Activated B cell treated with CpG ODN at 0.5 μM for 24 hours (primary cell): ENCODE measurements at regions of chr9 and their contacts with region 1.

Region 1: DNA sequence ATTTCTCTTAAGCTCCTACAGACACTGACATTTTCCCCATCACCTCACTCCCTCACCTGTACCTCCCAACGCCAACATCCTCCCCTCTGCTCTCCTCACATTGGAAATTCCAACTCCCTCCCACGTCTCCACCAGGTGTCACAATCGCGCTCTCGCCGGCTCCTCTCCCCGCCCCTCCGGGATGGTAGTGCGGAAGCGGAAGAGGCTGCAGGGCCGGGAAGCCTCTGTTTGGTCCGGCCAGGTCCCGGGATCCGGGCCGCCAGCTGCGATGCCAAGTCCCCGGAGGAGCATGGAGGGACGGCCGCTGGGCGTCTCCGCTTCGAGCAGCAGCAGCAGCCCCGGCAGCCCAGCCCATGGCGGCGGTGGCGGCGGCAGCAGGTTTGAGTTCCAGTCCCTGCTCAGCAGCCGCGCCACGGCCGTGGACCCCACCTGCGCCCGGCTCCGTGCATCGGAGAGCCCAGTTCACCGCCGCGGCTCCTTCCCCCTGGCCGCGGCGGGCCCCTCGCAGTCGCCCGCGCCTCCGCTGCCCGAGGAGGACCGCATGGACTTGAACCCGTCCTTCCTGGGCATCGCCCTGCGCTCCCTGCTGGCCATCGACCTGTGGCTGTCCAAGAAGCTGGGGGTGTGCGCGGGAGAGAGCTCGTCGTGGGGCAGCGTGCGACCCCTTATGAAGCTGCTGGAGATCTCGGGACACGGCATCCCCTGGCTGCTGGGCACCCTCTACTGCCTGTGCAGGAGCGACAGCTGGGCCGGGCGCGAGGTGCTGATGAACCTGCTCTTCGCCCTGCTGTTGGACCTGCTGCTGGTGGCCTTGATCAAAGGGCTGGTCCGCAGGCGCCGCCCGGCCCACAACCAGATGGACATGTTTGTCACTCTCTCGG is at the start of gene PLPP6:
- DNase-seq: peak; percentile 66
- ATAC-seq: peak; percentile 87
- H3K4me3 Mint-ChIP-seq: peak within 1 kb of the TSS; percentile 92
- H3K27ac Mint-ChIP-seq: peak within 1 kb of the TSS; percentile 80
- H3K4me1 Mint-ChIP-seq: peaks cover 47% of the 10 kb centered on the region
- H3K27me3 Mint-ChIP-seq: peaks cover 8% of the 10 kb centered on the region
- CTCF ChIP-seq: no peak
- total RNA-seq, gene PLPP6: 8.5 and 10.2 TPM in 2 replicates

Region 2: GRCh38 chr9:4464911-4465513 is 197.3 kb before region 1 on chr9:
- CTCF ChIA-PET with region 1: no interaction called
- POLR2A ChIA-PET with region 1: no interaction called
- intact Hi-C with region 1: loop called (anchors 10 kb)
- DNase-seq: no peak
- ATAC-seq: peak; percentile 87
- H3K4me3 Mint-ChIP-seq: peak overlapping the region; percentile 32
- H3K27ac Mint-ChIP-seq: peak overlapping the region; percentile 46
- H3K4me1 Mint-ChIP-seq: peaks cover 23% of the 10 kb centered on the region
- H3K27me3 Mint-ChIP-seq: peaks cover 4% of the 10 kb centered on the region
- CTCF ChIP-seq: no peak

Region 3: GRCh38 chr9:6383551-6384225 is 1721.3 kb after region 1 on chr9:
- CTCF ChIA-PET with region 1: no interaction called
- POLR2A ChIA-PET with region 1: no interaction called
- intact Hi-C with region 1: no loop called
- DNase-seq: no peak
- ATAC-seq: no peak
- H3K4me3 Mint-ChIP-seq: no peak overlapping the region
- H3K27ac Mint-ChIP-seq: no peak overlapping the region
- H3K4me1 Mint-ChIP-seq: peaks cover 20% of the 10 kb centered on the region
- H3K27me3 Mint-ChIP-seq: no peaks in the 10 kb centered on the region
- CTCF ChIP-seq: no peak